Natural killer cell (primary cell): ENCODE measurements at regions of chrX and their contacts with region 1.

Region 1: GRCh38 chrX:43557792-43558191 is 98.3 kb upstream of the MAOA start:
- DNase-seq: peak; percentile 22 to 80
- ATAC-seq: peak in 2 of 3 donors; percentile 46 to 68
- H3K4me3 ChIP-seq: no peak overlapping the region
- H3K4me3 Mint-ChIP-seq: no peak overlapping the region
- H3K27ac ChIP-seq: no peak overlapping the region
- H3K27ac Mint-ChIP-seq: no peak overlapping the region
- H3K4me1 ChIP-seq: no peaks in the 10 kb centered on the region
- H3K4me1 Mint-ChIP-seq: peaks cover 0 to 5% of the 10 kb centered on the region in 2 donors
- H3K27me3 ChIP-seq: no peaks in the 10 kb centered on the region
- H3K27me3 Mint-ChIP-seq: peaks cover 0 to 10% of the 10 kb centered on the region in 2 donors
- CTCF ChIP-seq: peak; percentile 35

Region 2: GRCh38 chrX:41781502-41781901 is 1776.3 kb before region 1 on chrX:
- intact Hi-C with region 1: loop called (anchors 5 kb)
- DNase-seq: peak in 1 of 2 donors; percentile 64
- ATAC-seq: peak in 2 of 3 donors; percentile 38 to 64
- H3K4me3 ChIP-seq: no peak overlapping the region
- H3K4me3 Mint-ChIP-seq: no peak overlapping the region
- H3K27ac ChIP-seq: no peak overlapping the region
- H3K27ac Mint-ChIP-seq: no peak overlapping the region
- H3K4me1 ChIP-seq: no peaks in the 10 kb centered on the region
- H3K4me1 Mint-ChIP-seq: no peaks in the 10 kb centered on the region
- H3K27me3 ChIP-seq: no peaks in the 10 kb centered on the region
- H3K27me3 Mint-ChIP-seq: no peaks in the 10 kb centered on the region
- CTCF ChIP-seq: peak; percentile 56

Region 3: DNA sequence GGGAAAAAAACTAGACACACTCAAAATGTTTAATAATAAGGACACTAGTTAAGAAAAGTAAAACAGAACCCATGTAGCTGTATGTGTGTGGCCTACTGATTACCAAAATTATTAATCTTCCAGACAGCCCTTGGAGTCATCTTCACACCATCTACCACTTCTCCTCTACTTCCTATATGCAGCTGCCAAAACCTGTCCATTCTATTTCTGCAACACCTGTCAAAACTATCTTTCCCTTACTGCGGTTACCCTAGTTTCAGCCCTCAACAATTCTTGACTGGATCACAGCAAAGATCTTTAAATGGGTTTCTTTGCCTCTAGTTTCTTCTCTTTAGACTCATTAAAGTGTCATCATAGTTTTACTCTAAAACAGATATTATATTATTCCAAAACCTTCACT is 1761.2 kb before region 1 on chrX:
- intact Hi-C with region 1: loop called (anchors 5 kb)
- DNase-seq: peak in 1 of 2 donors; percentile 6
- ATAC-seq: no peak
- H3K4me3 ChIP-seq: no peak overlapping the region
- H3K4me3 Mint-ChIP-seq: no peak overlapping the region
- H3K27ac ChIP-seq: no peak overlapping the region
- H3K27ac Mint-ChIP-seq: peak overlapping the region in 1 of 2 donors; percentile 64
- H3K4me1 ChIP-seq: peaks cover 12% of the 10 kb centered on the region
- H3K4me1 Mint-ChIP-seq: peaks cover 0 to 10% of the 10 kb centered on the region in 2 donors
- H3K27me3 ChIP-seq: no peaks in the 10 kb centered on the region
- H3K27me3 Mint-ChIP-seq: no peaks in the 10 kb centered on the region
- CTCF ChIP-seq: no peak

Region 4: GRCh38 chrX:43644124-43644701 is 86.4 kb after region 1 on chrX:
- intact Hi-C with region 1: no loop called
- DNase-seq: no peak
- ATAC-seq: no peak
- H3K4me3 ChIP-seq: no peak overlapping the region
- H3K4me3 Mint-ChIP-seq: no peak overlapping the region
- H3K27ac ChIP-seq: no peak overlapping the region
- H3K27ac Mint-ChIP-seq: no peak overlapping the region
- H3K4me1 ChIP-seq: no peaks in the 10 kb centered on the region
- H3K4me1 Mint-ChIP-seq: no peaks in the 10 kb centered on the region
- H3K27me3 ChIP-seq: no peaks in the 10 kb centered on the region
- H3K27me3 Mint-ChIP-seq: peaks cover 2 to 26% of the 10 kb centered on the region in 2 donors
- CTCF ChIP-seq: no peak

Region 5: GRCh38 chrX:43750248-43750676 is 192.5 kb after region 1 on chrX:
- intact Hi-C with region 1: loop called (anchors 5 kb)
- DNase-seq: peak in 1 of 2 donors; percentile 68
- ATAC-seq: peak; percentile 53 to 83 (median 59)
- H3K4me3 ChIP-seq: no peak overlapping the region
- H3K4me3 Mint-ChIP-seq: no peak overlapping the region
- H3K27ac ChIP-seq: no peak overlapping the region
- H3K27ac Mint-ChIP-seq: no peak overlapping the region
- H3K4me1 ChIP-seq: no peaks in the 10 kb centered on the region
- H3K4me1 Mint-ChIP-seq: peaks cover 0 to 5% of the 10 kb centered on the region in 2 donors
- H3K27me3 ChIP-seq: no peaks in the 10 kb centered on the region
- H3K27me3 Mint-ChIP-seq: peaks cover 0 to 11% of the 10 kb centered on the region in 2 donors
- CTCF ChIP-seq: peak; percentile 37